Activated CD4-positive, alpha-beta T cell treated with anti-CD3 and anti-CD28 coated beads, Interleukin-2, amount 10 ng/mL, durations not matched to agents 7 days and 5 days (primary cell): ENCODE measurements at regions of chr18 and their contacts with region 1.

Region 1: DNA sequence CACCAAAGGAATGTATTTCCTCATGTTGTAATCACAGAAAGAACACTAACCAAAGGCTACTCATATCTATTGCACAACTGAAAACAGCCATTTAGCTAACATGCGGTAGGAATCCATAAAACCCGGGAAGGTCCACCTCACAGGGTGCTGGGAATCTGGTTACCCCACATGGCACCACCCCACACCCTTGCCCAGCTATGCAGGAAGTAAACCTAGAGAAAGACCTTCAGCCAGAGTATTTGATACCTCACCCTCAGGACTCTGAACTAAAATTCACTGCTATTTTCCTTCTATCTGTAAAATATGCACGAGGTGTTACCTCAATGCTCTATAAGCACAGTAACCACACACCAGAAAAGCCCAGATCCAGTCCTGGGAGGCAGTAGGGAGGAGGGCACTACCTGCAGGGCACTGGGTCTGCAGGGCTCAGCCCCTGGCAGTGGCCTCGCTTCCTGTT is 45.8 kb downstream of the PTPN2 start:
- DNase-seq: no peak
- H3K4me3 Mint-ChIP-seq: peak overlapping the region; percentile 72
- H3K27ac Mint-ChIP-seq: peak overlapping the region; percentile 96
- H3K4me1 Mint-ChIP-seq: peaks cover 61% of the 10 kb centered on the region
- H3K27me3 Mint-ChIP-seq: no peaks in the 10 kb centered on the region

Region 2: GRCh38 chr18:12686100-12686499 is 152.1 kb before region 1 on chr18:
- CTCF ChIA-PET with region 1: no interaction called
- POLR2A ChIA-PET with region 1: no interaction called
- DNase-seq: no peak
- H3K4me3 Mint-ChIP-seq: no peak overlapping the region
- H3K27ac Mint-ChIP-seq: no peak overlapping the region
- H3K4me1 Mint-ChIP-seq: peaks cover 4% of the 10 kb centered on the region
- H3K27me3 Mint-ChIP-seq: no peaks in the 10 kb centered on the region

Region 3: DNA sequence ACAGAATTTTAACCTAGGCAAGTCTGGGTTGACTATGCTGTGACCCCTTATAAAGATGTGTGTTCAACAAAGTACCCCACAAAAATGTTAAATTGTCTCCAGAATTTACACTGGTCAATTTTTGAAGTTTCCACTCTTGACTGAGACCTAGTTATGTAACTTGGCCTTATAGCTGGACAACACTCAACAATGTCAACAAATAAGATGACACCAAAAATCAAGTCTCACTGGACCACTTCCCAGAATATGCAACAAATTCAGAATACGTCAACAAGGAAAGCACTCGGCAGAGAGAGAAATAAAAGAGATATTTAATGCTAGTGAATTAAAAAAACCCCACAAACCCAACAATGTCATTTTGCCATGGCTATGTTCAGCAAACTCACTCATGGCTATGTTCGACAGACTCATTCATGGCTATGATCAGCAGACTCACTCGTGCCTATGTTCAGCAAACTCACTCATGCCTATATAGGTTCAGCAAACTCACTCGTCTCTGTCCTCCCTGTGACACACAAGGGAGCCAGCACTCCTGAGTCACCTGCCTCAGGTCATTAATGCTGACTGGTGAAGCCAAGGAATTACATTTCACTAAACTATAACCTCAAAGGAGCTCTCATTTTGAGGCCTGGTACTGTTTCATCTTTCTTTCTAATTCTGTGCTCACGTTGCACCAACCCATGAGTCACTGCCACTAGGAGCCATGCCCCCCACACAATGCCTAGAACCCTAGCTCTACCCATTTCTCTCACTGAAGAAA is 26.8 kb before region 1 on chr18:
- CTCF ChIA-PET with region 1: no interaction called
- POLR2A ChIA-PET with region 1: no interaction called
- DNase-seq: no peak
- H3K4me3 Mint-ChIP-seq: no peak overlapping the region
- H3K27ac Mint-ChIP-seq: peak overlapping the region; percentile 14
- H3K4me1 Mint-ChIP-seq: no peaks in the 10 kb centered on the region
- H3K27me3 Mint-ChIP-seq: no peaks in the 10 kb centered on the region

Region 4: DNA sequence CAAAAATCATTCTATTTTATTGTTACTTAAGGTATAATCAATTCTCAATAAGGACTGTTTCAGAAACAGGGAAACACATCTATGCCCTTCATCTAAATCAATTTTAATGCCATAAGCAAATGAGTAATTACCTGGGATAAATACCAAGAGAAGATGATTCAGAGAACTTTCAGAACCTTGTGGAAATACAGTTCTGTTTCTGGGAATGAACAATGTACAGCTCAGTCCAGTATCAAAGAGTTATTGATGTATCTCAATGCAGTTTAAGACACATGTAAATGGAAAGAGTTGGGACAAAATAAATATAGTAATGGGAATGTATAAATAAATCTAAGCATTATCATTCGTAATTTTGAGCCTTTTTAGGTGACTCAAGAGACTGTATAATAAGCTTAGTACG is 14.3 kb before region 1 on chr18:
- CTCF ChIA-PET with region 1: interaction called, 10 read pairs
- POLR2A ChIA-PET with region 1: no interaction called
- DNase-seq: no peak
- H3K4me3 Mint-ChIP-seq: no peak overlapping the region
- H3K27ac Mint-ChIP-seq: no peak overlapping the region
- H3K4me1 Mint-ChIP-seq: peaks cover 33% of the 10 kb centered on the region
- H3K27me3 Mint-ChIP-seq: no peaks in the 10 kb centered on the region